PC-3 (cell line): ENCODE measurements at regions of chr7 and their contacts with region 1.

Region 1: DNA sequence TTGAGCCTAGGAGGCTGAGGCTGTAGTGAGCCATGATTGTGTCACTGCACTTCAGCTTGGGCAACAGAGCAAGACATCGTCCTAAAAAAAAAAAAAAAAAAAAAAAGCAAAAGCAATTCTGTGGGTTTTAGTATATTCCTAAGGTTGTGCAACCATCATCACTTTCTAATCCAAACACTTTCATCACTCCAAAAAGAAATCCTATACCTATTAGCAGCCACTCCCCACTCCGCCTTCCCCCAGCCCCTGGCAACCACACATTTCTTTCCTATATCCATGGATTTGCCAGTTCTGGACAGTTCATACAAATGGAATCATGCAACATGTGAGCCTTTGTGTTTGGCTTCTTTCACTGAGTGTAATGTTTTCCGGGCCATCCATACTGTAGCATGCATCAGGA is 20.4 kb downstream of the ZAN start:
- DNase-seq: no peak
- ATAC-seq: no peak
- H3K4me3 ChIP-seq: no peak overlapping the region
- H3K27ac ChIP-seq: no peak overlapping the region
- H3K4me1 ChIP-seq: no peaks in the 10 kb centered on the region
- H3K27me3 ChIP-seq: peaks cover 6% of the 10 kb centered on the region; the same call in 1 of the 2 replicates
- CTCF ChIP-seq: no peak

Region 2: DNA sequence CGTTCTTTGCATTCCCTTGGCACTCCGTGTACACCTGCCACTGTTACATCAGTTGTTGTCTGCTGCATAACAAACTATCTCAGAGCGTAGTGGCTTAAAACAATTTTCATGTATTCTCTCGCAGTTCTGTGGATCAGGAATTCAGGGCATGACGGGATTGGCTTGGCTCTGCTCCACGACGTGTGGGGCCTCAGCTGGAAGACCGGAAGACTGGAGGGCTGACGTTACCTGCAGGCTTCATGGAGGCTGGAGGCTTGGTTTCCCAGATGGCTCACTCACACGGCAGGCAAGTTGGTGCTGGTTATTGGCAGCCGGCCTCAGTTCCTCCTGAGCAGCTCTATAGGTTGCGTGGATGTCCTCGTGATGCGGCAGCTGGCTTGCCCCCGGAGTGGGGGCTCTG is 244.5 kb before region 1 on chr7:
- CTCF ChIA-PET with region 1: no interaction called
- POLR2A ChIA-PET with region 1: no interaction called
- intact Hi-C with region 1: no loop called
- DNase-seq: no peak
- ATAC-seq: no peak
- H3K4me3 ChIP-seq: no peak overlapping the region
- H3K27ac ChIP-seq: no peak overlapping the region
- H3K4me1 ChIP-seq: no peaks in the 10 kb centered on the region
- H3K27me3 ChIP-seq: no peaks in the 10 kb centered on the region
- CTCF ChIP-seq: no peak

Region 3: GRCh38 chr7:100835903-100836811 is 82.4 kb after region 1 on chr7:
- CTCF ChIA-PET with region 1: no interaction called
- POLR2A ChIA-PET with region 1: interaction called, 31 read pairs
- intact Hi-C with region 1: no loop called
- DNase-seq: no peak
- ATAC-seq: peak; percentile 78
- H3K4me3 ChIP-seq: no peak overlapping the region
- H3K27ac ChIP-seq: no peak overlapping the region
- H3K4me1 ChIP-seq: no peaks in the 10 kb centered on the region
- H3K27me3 ChIP-seq: no peaks in the 10 kb centered on the region
- CTCF ChIP-seq: no peak

Region 4: DNA sequence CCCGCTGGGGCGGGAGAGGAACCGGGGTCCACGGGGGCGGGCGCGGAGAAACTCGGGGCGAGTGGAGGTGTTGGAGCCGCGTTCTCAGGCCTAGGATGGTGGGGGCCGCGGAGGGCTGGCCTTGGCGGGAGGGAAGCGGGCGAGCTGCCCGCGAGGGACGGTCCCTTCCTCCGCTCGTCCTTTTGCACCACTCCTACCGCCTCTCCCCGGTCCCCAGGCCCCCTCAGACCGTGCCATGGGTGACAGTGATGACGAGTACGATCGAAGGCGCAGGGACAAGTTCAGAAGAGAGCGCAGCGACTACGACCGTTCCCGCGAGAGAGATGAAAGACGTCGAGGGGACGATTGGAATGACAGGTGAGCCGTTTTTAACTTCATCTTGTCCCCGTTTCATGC is 121.6 kb after region 1 on chr7:
- CTCF ChIA-PET with region 1: no interaction called
- POLR2A ChIA-PET with region 1: no interaction called
- intact Hi-C with region 1: no loop called
- DNase-seq: peak; percentile 20
- ATAC-seq: peak; percentile 33
- H3K4me3 ChIP-seq: peak overlapping the region; percentile 78
- H3K27ac ChIP-seq: peak overlapping the region; percentile 76
- H3K4me1 ChIP-seq: peaks cover 27% of the 10 kb centered on the region
- H3K27me3 ChIP-seq: no peaks in the 10 kb centered on the region
- CTCF ChIP-seq: no peak